Panc1 (cell line): ENCODE measurements at regions of chr2 and their contacts with region 1.

Region 1: GRCh38 chr2:4937551-4937950 is 754.6 kb upstream of the SOX11 start:
- DNase-seq: no peak
- ATAC-seq: no peak
- H3K4me3 ChIP-seq: no peak overlapping the region
- H3K27ac ChIP-seq: no peak overlapping the region
- H3K4me1 ChIP-seq: no peaks in the 10 kb centered on the region
- H3K27me3 ChIP-seq: no peaks in the 10 kb centered on the region
- CTCF ChIP-seq: no peak

Region 2: DNA sequence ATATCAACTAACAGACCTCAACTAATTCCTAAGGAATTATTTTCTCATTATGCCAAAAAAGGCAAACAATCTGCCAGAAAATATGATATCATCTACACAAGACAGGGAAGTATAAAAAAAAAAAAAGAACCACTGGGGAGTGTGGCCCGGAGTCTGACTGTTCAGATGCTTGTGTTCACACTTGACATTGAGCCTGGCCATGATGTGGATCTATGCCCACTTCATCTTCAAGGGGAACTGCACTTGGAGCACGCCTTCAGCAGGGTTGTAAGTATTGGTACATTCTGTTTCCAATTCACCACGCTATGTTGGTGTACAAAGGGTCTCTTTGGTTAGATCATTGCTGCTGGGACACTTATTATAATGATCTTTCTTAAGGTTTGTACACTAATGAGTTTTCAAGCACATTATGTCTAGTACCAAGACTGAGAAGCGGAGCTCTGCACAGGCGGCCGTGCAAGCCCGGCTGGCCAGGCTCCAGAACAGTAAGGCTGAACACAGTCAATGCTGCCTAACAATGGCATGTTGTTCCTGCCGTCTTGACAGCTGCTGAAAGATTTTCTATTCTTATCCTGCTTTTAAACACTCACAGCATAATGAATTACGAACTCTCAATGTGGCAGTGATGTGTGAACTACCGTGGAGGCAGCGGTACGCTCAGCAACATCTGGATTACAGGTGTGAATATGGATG is 33.7 kb before region 1 on chr2:
- CTCF ChIA-PET with region 1: no interaction called
- POLR2A ChIA-PET with region 1: no interaction called
- in situ Hi-C with region 1: no loop called
- intact Hi-C with region 1: no loop called
- DNase-seq: no peak
- ATAC-seq: no peak
- H3K4me3 ChIP-seq: no peak overlapping the region
- H3K27ac ChIP-seq: no peak overlapping the region
- H3K4me1 ChIP-seq: no peaks in the 10 kb centered on the region
- H3K27me3 ChIP-seq: no peaks in the 10 kb centered on the region
- CTCF ChIP-seq: no peak

Region 3: DNA sequence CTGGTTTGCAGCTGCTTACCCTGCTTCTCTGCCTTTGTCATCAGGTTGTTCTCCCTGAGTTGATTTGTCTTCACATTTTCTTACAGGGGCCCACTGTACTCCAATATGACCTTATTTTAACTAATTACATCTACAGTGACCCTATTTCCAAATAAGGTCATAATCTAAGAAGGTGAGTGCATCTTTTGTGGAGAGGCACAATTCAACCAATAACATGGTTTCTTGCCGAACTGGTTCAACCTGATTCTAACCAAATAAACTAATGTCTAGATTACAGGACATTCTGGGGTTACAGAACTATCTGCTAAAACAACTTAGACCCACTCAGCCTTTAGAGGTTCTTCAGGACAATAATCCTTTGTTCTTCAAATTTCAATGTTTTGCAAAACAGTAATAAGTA is 258.1 kb after region 1 on chr2:
- CTCF ChIA-PET with region 1: no interaction called
- POLR2A ChIA-PET with region 1: no interaction called
- in situ Hi-C with region 1: no loop called
- intact Hi-C with region 1: no loop called
- DNase-seq: no peak
- ATAC-seq: no peak
- H3K4me3 ChIP-seq: no peak overlapping the region
- H3K27ac ChIP-seq: no peak overlapping the region
- H3K4me1 ChIP-seq: no peaks in the 10 kb centered on the region
- H3K27me3 ChIP-seq: no peaks in the 10 kb centered on the region
- CTCF ChIP-seq: no peak

Region 4: GRCh38 chr2:6429208-6429986 is 1491.8 kb after region 1 on chr2:
- CTCF ChIA-PET with region 1: interaction called, 10 read pairs
- POLR2A ChIA-PET with region 1: no interaction called
- in situ Hi-C with region 1: no loop called
- intact Hi-C with region 1: no loop called
- DNase-seq: no peak
- ATAC-seq: no peak
- H3K4me3 ChIP-seq: no peak overlapping the region
- H3K27ac ChIP-seq: no peak overlapping the region
- H3K4me1 ChIP-seq: no peaks in the 10 kb centered on the region
- H3K27me3 ChIP-seq: no peaks in the 10 kb centered on the region
- CTCF ChIP-seq: no peak